HepG2 (cell line): ENCODE measurements at regions of chr6 and their contacts with region 1.

Region 1: GRCh38 chr6:42879372-42880239 is at the start of gene RPL7L1:
- DNase-seq: peak; percentile 95
- ATAC-seq: peak; percentile 94
- H3K4me3 ChIP-seq: peak within 1 kb of the TSS; percentile 85 to 92 (median 89)
- H3K27ac ChIP-seq: peak within 1 kb of the TSS; percentile 93
- H3K4me1 ChIP-seq: peaks cover 65% of the 10 kb centered on the region
- H3K27me3 ChIP-seq: no peaks in the 10 kb centered on the region; a peak in 1 of 5 replicates
- CTCF ChIP-seq: no peak; the same call in none of the 2 replicates
- EP300 ChIP-seq: peak; percentile 17 to 20; a peak in 2 of 4 replicates
- POLR2A ChIP-seq: peak; percentile 92 to 98
- RAD21 ChIP-seq: peak; percentile 25; the same call in 1 of the 2 replicates
- total RNA-seq, gene RPL7L1: 179 and 228 TPM in 2 replicates

Region 2: GRCh38 chr6:42661540-42662153 is 218.0 kb before region 1 on chr6:
- CTCF ChIA-PET with region 1: interaction called, 44 read pairs
- POLR2A ChIA-PET with region 1: interaction called, 4 read pairs
- in situ Hi-C with region 1: loop called (anchors 5 kb)
- intact Hi-C with region 1: loop called (anchors 1 kb)
- DNase-seq: peak; percentile 78
- ATAC-seq: peak; percentile 83
- H3K4me3 ChIP-seq: no peak overlapping the region
- H3K27ac ChIP-seq: no peak overlapping the region
- H3K4me1 ChIP-seq: no peaks in the 10 kb centered on the region
- H3K27me3 ChIP-seq: no peaks in the 10 kb centered on the region
- CTCF ChIP-seq: peak; percentile 88
- EP300 ChIP-seq: no peak
- POLR2A ChIP-seq: no peak
- RAD21 ChIP-seq: peak; percentile 86

Region 3: GRCh38 chr6:42745707-42746462 is 133.7 kb before region 1 on chr6 and contains the start of gene TBCC:
- CTCF ChIA-PET with region 1: no interaction called
- POLR2A ChIA-PET with region 1: interaction called, 55 read pairs
- in situ Hi-C with region 1: no loop called
- intact Hi-C with region 1: loop called (anchors 2 kb)
- DNase-seq: peak; percentile 99
- ATAC-seq: peak; percentile 87
- H3K4me3 ChIP-seq: peak within 1 kb of the TSS; percentile 93 to 100 (median 99)
- H3K27ac ChIP-seq: peak within 1 kb of the TSS; percentile 93
- H3K4me1 ChIP-seq: peaks cover 44% of the 10 kb centered on the region
- H3K27me3 ChIP-seq: no peaks in the 10 kb centered on the region; a peak in 1 of 5 replicates
- CTCF ChIP-seq: no peak; the same call in 1 of the 2 replicates
- EP300 ChIP-seq: 0 out of 4 replicates have a peak, but pooled peaks of 1 of the 2 experiments have one; percentile 15
- POLR2A ChIP-seq: peak; percentile 97 to 100
- RAD21 ChIP-seq: 0 out of 2 replicates have a peak, but pooled peaks have one; percentile 4
- total RNA-seq, gene TBCC: 36.1 and 43.2 TPM in 2 replicates

Region 4: GRCh38 chr6:42831237-42831636 is 48.4 kb before region 1 on chr6:
- CTCF ChIA-PET with region 1: no interaction called
- POLR2A ChIA-PET with region 1: no interaction called
- in situ Hi-C with region 1: no loop called
- intact Hi-C with region 1: no loop called
- DNase-seq: no peak
- ATAC-seq: no peak
- H3K4me3 ChIP-seq: no peak overlapping the region
- H3K27ac ChIP-seq: no peak overlapping the region
- H3K4me1 ChIP-seq: no peaks in the 10 kb centered on the region
- H3K27me3 ChIP-seq: no peaks in the 10 kb centered on the region
- CTCF ChIP-seq: no peak
- EP300 ChIP-seq: no peak
- POLR2A ChIP-seq: no peak
- RAD21 ChIP-seq: no peak

Region 5: DNA sequence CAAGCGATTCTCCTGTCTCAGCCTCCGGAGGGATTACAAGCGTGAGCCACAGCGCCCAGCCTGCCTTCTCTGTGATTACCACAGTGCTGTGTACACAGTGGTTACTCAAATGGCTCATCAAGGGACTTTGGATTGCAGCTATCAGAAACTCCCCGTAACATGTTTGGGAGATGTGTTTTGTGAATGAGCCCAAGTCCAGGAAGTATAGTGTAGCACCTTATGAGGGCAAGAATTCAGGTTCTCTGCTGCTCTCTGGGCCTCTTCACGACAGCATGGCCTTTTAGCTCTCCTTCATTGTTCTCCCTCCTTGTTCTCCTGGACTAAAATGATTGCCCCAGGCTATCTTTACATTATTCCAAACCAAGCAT is 34.3 kb before region 1 on chr6:
- CTCF ChIA-PET with region 1: no interaction called
- POLR2A ChIA-PET with region 1: interaction called, 12 read pairs
- in situ Hi-C with region 1: no loop called
- intact Hi-C with region 1: no loop called
- DNase-seq: peak; percentile 94
- ATAC-seq: peak; percentile 100
- H3K4me3 ChIP-seq: 0 out of 6 replicates have a peak overlapping the region, but pooled peaks of 1 of the 3 experiments have one; percentile 7
- H3K27ac ChIP-seq: peak overlapping the region; percentile 75
- H3K4me1 ChIP-seq: peaks cover 26% of the 10 kb centered on the region
- H3K27me3 ChIP-seq: no peaks in the 10 kb centered on the region
- CTCF ChIP-seq: peak; percentile 32
- EP300 ChIP-seq: peak; percentile 63 to 73; a peak in 1 of 4 replicates
- POLR2A ChIP-seq: 0 out of 4 replicates have a peak, but pooled peaks of 1 of the 2 experiments have one; percentile 41
- RAD21 ChIP-seq: peak; percentile 60; the same call in 1 of the 2 replicates

Region 6: GRCh38 chr6:42896178-42896719 is 16.6 kb after region 1 on chr6:
- CTCF ChIA-PET with region 1: no interaction called
- POLR2A ChIA-PET with region 1: interaction called, 147 read pairs
- in situ Hi-C with region 1: no loop called
- intact Hi-C with region 1: loop called (anchors 1 kb)
- DNase-seq: no peak
- ATAC-seq: no peak
- H3K4me3 ChIP-seq: no peak overlapping the region
- H3K27ac ChIP-seq: no peak overlapping the region
- H3K4me1 ChIP-seq: peaks cover 35% of the 10 kb centered on the region
- H3K27me3 ChIP-seq: no peaks in the 10 kb centered on the region
- CTCF ChIP-seq: no peak
- EP300 ChIP-seq: no peak
- POLR2A ChIP-seq: no peak
- RAD21 ChIP-seq: no peak

Region 7: DNA sequence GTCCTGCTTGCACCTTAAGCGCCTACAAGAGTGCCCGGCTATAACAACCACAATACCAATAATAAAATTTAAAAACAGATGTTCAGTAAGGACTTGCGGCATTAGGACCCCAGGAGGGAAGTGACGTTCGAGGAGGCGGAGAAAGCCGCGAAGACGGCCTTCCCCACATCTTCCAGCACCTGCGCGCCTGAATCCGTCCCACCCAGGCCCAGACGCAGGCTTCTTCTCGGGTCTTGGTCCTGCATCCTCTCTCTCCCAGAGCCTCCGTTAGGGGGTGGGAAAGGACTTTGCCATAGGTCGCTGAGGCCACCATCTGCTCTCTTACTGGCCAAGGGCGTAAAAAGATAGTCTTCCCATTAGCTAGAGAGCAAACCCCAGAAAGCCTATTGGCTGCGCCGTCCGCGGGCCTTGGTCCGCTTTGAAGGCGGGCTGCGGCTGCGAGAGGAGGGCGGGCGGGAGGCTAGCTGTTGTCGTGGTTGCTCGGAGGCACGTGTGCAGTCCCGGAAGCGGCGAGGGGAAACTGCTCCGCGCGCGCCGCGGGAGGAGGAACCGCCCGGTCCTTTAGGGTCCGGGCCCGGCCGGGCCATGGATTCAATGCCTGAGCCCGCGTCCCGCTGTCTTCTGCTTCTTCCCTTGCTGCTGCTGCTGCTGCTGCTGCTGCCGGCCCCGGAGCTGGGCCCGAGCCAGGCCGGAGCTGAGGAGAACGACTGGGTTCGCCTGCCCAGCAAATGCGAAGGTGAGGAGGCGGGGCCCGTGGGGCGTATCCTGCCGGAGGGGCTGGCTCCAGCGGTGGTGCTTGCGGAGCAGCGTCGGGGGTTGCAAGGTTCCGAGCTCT is 49.6 kb after region 1 on chr6 and contains the start of gene CNPY3:
- CTCF ChIA-PET with region 1: no interaction called
- POLR2A ChIA-PET with region 1: interaction called, 14 read pairs
- in situ Hi-C with region 1: no loop called
- intact Hi-C with region 1: no loop called
- DNase-seq: peak; percentile 97
- ATAC-seq: peak; percentile 94
- H3K4me3 ChIP-seq: peak within 1 kb of the TSS; percentile 71 to 79 (median 78)
- H3K27ac ChIP-seq: peak within 1 kb of the TSS; percentile 83
- H3K4me1 ChIP-seq: peaks cover 64% of the 10 kb centered on the region
- H3K27me3 ChIP-seq: no peaks in the 10 kb centered on the region; a peak in 1 of 5 replicates
- CTCF ChIP-seq: peak; percentile 46
- EP300 ChIP-seq: peak in 1 of 2 experiments; percentile 8; a peak in 1 of 4 replicates
- POLR2A ChIP-seq: peak; percentile 70 to 74
- RAD21 ChIP-seq: peak; percentile 44
- total RNA-seq, gene CNPY3: 31.4 and 60.2 TPM in 2 replicates

Region 8: GRCh38 chr6:42984001-42984923 is 104.7 kb after region 1 on chr6 and contains the start of gene PPP2R5D:
- CTCF ChIA-PET with region 1: no interaction called
- POLR2A ChIA-PET with region 1: interaction called, 14 read pairs
- in situ Hi-C with region 1: no loop called
- intact Hi-C with region 1: no loop called
- DNase-seq: peak; percentile 100
- ATAC-seq: peak; percentile 95
- H3K4me3 ChIP-seq: peak within 1 kb of the TSS; percentile 88 to 99 (median 92)
- H3K27ac ChIP-seq: peak within 1 kb of the TSS; percentile 75
- H3K4me1 ChIP-seq: peaks cover 52% of the 10 kb centered on the region
- H3K27me3 ChIP-seq: no peaks in the 10 kb centered on the region; a peak in 1 of 5 replicates
- CTCF ChIP-seq: no peak
- EP300 ChIP-seq: no peak
- POLR2A ChIP-seq: peak; percentile 93 to 99
- RAD21 ChIP-seq: peak; percentile 29; the same call in 1 of the 2 replicates
- total RNA-seq, gene PPP2R5D: 55.6 and 60.4 TPM in 2 replicates

Region 9: GRCh38 chr6:43355862-43356590 is 476.4 kb after region 1 on chr6:
- CTCF ChIA-PET with region 1: no interaction called
- POLR2A ChIA-PET with region 1: no interaction called
- in situ Hi-C with region 1: no loop called
- intact Hi-C with region 1: no loop called
- DNase-seq: peak; percentile 64
- ATAC-seq: peak; percentile 99
- H3K4me3 ChIP-seq: no peak overlapping the region
- H3K27ac ChIP-seq: no peak overlapping the region
- H3K4me1 ChIP-seq: peaks cover 2% of the 10 kb centered on the region
- H3K27me3 ChIP-seq: no peaks in the 10 kb centered on the region
- CTCF ChIP-seq: peak; percentile 91
- EP300 ChIP-seq: no peak
- POLR2A ChIP-seq: no peak
- RAD21 ChIP-seq: peak; percentile 86